Dendritic cell treated with granulocyte-macrophage colony-stimulating factor and Interleukin-4, amounts not matched to agents 40 ng/mL and 50 ng/mL, for 4 days (primary cell): ENCODE measurements at regions of chr6 and their contacts with region 1.

Region 1: DNA sequence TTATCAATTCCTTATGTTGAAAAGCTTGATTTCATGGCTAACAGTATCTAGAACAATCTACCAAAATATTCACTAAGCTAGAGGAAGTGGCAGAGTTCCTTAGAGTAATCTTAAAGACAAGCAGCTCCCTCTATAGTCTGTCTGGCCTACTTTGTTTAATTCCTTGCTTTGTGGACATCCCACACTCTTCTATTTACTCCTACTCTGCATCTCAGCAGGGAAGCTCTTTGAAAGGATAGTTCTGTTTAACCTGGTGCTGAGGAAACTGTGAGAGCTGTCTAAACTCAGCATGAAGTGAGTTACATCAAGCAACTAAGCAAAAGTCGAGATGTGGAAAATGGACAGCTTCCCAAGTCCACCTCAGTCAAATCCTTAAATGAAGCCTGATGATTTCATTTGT is 4.3 kb downstream of the REV3L start:
- H3K4me3 Mint-ChIP-seq: no peak overlapping the region
- H3K27ac Mint-ChIP-seq: no peak overlapping the region
- H3K4me1 Mint-ChIP-seq: peaks cover 32% of the 10 kb centered on the region
- H3K27me3 Mint-ChIP-seq: no peaks in the 10 kb centered on the region

Region 2: GRCh38 chr6:111361648-111362047 is 117.1 kb before region 1 on chr6:
- intact Hi-C with region 1: loop called (anchors 5 kb)
- H3K4me3 Mint-ChIP-seq: no peak overlapping the region
- H3K27ac Mint-ChIP-seq: no peak overlapping the region
- H3K4me1 Mint-ChIP-seq: no peaks in the 10 kb centered on the region
- H3K27me3 Mint-ChIP-seq: no peaks in the 10 kb centered on the region

Region 3: GRCh38 chr6:111406200-111406721 is 72.5 kb before region 1 on chr6:
- intact Hi-C with region 1: loop called (anchors 2 kb)
- H3K4me3 Mint-ChIP-seq: no peak overlapping the region
- H3K27ac Mint-ChIP-seq: peak overlapping the region; percentile 63
- H3K4me1 Mint-ChIP-seq: peaks cover 33% of the 10 kb centered on the region
- H3K27me3 Mint-ChIP-seq: no peaks in the 10 kb centered on the region